ENCODE measurements at regions of chr6 and their contacts with region 1.

Region 1: GRCh38 chr6:14276667-14277404 is 159.3 kb downstream of the CD83 start:
- DNase-seq: peak; percentile 82
- ATAC-seq: peak; percentile 92
- H3K4me3 ChIP-seq: peak overlapping the region in 4 of 5 experiments; percentile 19 to 50 (median 24)
- H3K4me3 Mint-ChIP-seq: peak overlapping the region; percentile 58
- H3K27ac ChIP-seq: peak overlapping the region; percentile 97 to 99
- H3K27ac Mint-ChIP-seq: peak overlapping the region; percentile 92
- H3K4me1 ChIP-seq: peaks cover 61 to 79% of the 10 kb centered on the region in 2 donors
- H3K4me1 Mint-ChIP-seq: peaks cover 75% of the 10 kb centered on the region
- H3K27me3 ChIP-seq: no peaks in the 10 kb centered on the region
- H3K27me3 Mint-ChIP-seq: no peaks in the 10 kb centered on the region
- CTCF ChIP-seq: no peak

Region 2: GRCh38 chr6:14117158-14118090 is 159.4 kb before region 1 on chr6 and contains the start of gene CD83:
- CTCF ChIA-PET with region 1: no interaction called
- POLR2A ChIA-PET with region 1: no interaction called
- intact Hi-C with region 1: no loop called
- DNase-seq: peak; percentile 97
- ATAC-seq: peak; percentile 80
- H3K4me3 ChIP-seq: peak within 1 kb of the TSS; percentile 75 to 100 (median 94)
- H3K4me3 Mint-ChIP-seq: peak within 1 kb of the TSS; percentile 93
- H3K27ac ChIP-seq: peak within 1 kb of the TSS; percentile 99
- H3K27ac Mint-ChIP-seq: peak within 1 kb of the TSS; percentile 97
- H3K4me1 ChIP-seq: peaks cover 37 to 44% of the 10 kb centered on the region in 2 donors
- H3K4me1 Mint-ChIP-seq: peaks cover 37% of the 10 kb centered on the region
- H3K27me3 ChIP-seq: no peaks in the 10 kb centered on the region
- H3K27me3 Mint-ChIP-seq: no peaks in the 10 kb centered on the region
- CTCF ChIP-seq: no peak
- total RNA-seq, gene CD83: 332 and 339 TPM in 2 replicates

Region 3: GRCh38 chr6:14238374-14238773 is 38.5 kb before region 1 on chr6:
- CTCF ChIA-PET with region 1: no interaction called
- POLR2A ChIA-PET with region 1: interaction called, 12 read pairs
- intact Hi-C with region 1: no loop called
- DNase-seq: no peak
- ATAC-seq: no peak
- H3K4me3 ChIP-seq: no peak overlapping the region
- H3K4me3 Mint-ChIP-seq: no peak overlapping the region
- H3K27ac ChIP-seq: no peak overlapping the region
- H3K27ac Mint-ChIP-seq: no peak overlapping the region
- H3K4me1 ChIP-seq: peaks cover 35 to 36% of the 10 kb centered on the region in 2 donors
- H3K4me1 Mint-ChIP-seq: peaks cover 54% of the 10 kb centered on the region
- H3K27me3 ChIP-seq: no peaks in the 10 kb centered on the region
- H3K27me3 Mint-ChIP-seq: no peaks in the 10 kb centered on the region
- CTCF ChIP-seq: no peak

Region 4: DNA sequence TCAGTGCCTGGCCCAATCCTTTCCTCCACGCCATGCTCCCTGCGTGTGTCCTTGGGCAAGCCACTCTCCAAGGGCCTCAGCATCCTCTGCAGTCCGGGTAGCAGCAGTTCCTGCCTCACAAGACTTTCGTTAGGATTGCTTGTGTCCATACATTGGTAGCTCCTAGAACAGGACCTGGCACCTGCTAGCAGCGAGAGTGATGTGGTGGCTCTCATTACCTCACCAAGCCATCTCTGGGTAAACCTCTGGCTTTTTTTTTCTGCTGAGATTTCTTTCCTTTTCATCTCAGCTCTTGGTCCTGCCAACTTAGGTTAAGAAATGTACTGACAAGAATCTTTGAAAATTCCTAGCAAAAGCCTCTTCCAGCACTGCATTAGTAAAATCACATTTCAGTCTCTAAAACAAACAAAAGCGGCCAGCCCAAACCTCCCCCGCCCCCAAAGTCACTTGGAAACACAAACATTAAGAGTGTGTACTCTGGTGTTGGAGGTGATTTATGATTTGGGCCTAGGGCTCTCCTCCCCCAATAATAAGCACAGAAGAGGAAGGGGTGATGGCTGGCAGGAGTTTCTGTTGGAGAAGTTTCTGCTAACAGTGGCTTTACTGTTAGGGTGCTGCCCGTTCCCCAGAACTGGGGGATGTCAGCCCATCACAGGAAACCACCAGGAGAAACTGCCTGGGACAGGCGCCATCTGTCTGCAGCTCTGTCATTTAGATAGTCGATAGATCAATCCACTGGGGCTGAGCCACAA is 40.0 kb after region 1 on chr6:
- CTCF ChIA-PET with region 1: no interaction called
- POLR2A ChIA-PET with region 1: no interaction called
- intact Hi-C with region 1: loop called (anchors 1 kb)
- DNase-seq: peak; percentile 32
- ATAC-seq: no peak
- H3K4me3 ChIP-seq: no peak overlapping the region
- H3K4me3 Mint-ChIP-seq: peak overlapping the region; percentile 32
- H3K27ac ChIP-seq: no peak overlapping the region
- H3K27ac Mint-ChIP-seq: peak overlapping the region; percentile 47
- H3K4me1 ChIP-seq: peaks cover 60 to 63% of the 10 kb centered on the region in 2 donors
- H3K4me1 Mint-ChIP-seq: peaks cover 60% of the 10 kb centered on the region
- H3K27me3 ChIP-seq: no peaks in the 10 kb centered on the region
- H3K27me3 Mint-ChIP-seq: no peaks in the 10 kb centered on the region
- CTCF ChIP-seq: no peak

Region 5: DNA sequence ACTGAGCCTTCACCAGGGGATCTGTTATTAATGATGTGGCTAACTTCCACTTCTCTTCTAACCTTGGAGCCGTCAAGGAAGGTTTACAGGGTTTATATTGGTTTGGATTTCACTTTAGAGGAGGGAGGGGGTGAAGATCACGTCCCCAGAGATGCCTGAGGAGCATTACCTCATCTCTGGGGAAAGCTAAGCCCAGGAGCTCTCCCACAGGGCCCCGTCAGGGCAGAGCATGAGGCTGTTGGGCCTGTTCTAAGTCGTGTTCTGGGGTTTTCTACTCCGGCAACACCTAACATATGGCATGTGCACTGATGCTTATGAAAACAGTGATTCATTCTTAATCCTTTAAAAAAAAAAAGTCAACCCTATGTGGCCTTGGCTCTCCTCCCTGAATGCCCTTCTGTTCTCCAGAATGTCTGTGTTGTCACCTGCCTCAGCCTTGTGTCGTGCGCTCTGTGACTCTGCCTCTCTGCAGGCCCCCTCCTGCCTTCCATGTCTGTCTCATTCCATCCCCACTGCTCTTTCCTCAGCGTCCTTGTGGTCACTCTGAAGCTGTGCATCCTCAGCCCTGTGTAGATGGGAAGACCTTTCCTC is 871.6 kb after region 1 on chr6:
- CTCF ChIA-PET with region 1: no interaction called
- POLR2A ChIA-PET with region 1: no interaction called
- intact Hi-C with region 1: loop called (anchors 2 kb)
- DNase-seq: no peak
- ATAC-seq: peak; percentile 21
- H3K4me3 ChIP-seq: no peak overlapping the region
- H3K4me3 Mint-ChIP-seq: peak overlapping the region; percentile 12
- H3K27ac ChIP-seq: no peak overlapping the region
- H3K27ac Mint-ChIP-seq: peak overlapping the region; percentile 12
- H3K4me1 ChIP-seq: peaks cover 17 to 28% of the 10 kb centered on the region in 2 donors
- H3K4me1 Mint-ChIP-seq: peaks cover 26% of the 10 kb centered on the region
- H3K27me3 ChIP-seq: no peaks in the 10 kb centered on the region
- H3K27me3 Mint-ChIP-seq: no peaks in the 10 kb centered on the region
- CTCF ChIP-seq: no peak